Body of pancreas (tissue), 4 donors: ENCODE measurements at regions of chr7 and their contacts with region 1.

Region 1: DNA sequence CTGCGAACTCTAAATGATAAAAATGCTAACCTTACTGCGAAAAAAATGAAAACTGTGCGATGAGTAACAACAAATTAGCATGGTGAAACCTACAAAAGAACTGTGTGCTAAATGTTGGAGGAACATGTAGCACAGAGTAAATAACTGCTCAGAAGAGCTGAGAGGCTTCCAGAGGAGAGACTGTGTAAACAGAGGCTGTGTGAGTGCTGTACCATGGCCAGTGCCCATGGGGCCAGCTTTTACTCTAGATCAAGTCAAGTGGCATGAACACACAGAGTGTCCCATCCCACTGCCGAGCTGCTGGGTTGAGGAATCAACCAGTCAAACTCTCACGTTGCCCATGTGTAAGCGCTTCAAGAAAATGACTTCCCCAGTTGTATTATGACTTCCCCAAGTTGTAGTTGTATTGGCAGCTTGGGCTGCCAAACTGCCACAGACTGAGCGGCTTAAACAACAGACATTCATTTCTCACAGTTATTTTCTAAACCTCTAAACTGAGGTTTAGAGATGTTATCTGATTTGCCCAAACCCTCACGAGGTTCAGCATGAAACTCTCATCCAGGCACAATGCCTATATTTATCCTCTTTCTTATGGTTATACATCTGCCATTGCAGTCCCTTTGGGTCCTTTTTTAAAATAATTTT is 270.7 kb downstream of the ABCA13 start:
- DNase-seq: no peak
- ATAC-seq: no peak
- H3K4me3 ChIP-seq: no peak overlapping the region
- H3K27ac ChIP-seq: no peak overlapping the region
- H3K4me1 ChIP-seq: no peaks in the 10 kb centered on the region
- H3K27me3 ChIP-seq: no peaks in the 10 kb centered on the region
- CTCF ChIP-seq: no peak
- POLR2A ChIP-seq: no peak

Region 2: DNA sequence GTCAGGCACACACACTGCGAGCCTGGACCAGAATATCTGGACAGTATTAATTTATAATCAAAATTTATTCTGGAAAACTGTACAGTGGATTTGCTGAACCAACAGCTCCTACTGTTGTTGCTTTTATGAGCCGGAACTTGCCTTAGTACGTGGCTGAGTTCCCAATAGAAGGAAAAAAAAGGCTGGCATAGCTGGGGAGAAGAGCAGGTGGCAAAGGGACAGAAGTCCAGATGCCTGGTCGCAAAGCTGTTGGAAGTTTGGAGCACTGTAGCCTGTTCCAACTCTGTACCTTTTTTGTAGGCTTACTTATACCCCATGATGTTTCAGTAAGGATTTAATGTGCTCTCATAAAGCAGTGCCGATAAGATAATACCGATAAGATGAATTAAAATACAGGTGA is 63.1 kb after region 1 on chr7:
- intact Hi-C with region 1: loop called (anchors 10 kb)
- DNase-seq: no peak
- ATAC-seq: no peak
- H3K4me3 ChIP-seq: no peak overlapping the region
- H3K27ac ChIP-seq: no peak overlapping the region
- H3K4me1 ChIP-seq: no peaks in the 10 kb centered on the region
- H3K27me3 ChIP-seq: no peaks in the 10 kb centered on the region
- CTCF ChIP-seq: no peak
- POLR2A ChIP-seq: no peak

Region 3: GRCh38 chr7:48563334-48563733 is 121.4 kb after region 1 on chr7:
- intact Hi-C with region 1: no loop called
- DNase-seq: no peak
- ATAC-seq: no peak
- H3K4me3 ChIP-seq: no peak overlapping the region
- H3K27ac ChIP-seq: no peak overlapping the region
- H3K4me1 ChIP-seq: no peaks in the 10 kb centered on the region
- H3K27me3 ChIP-seq: no peaks in the 10 kb centered on the region
- CTCF ChIP-seq: no peak
- POLR2A ChIP-seq: no peak